ENCODE measurements at regions of chr19 and their contacts with region 1.

Region 1: DNA sequence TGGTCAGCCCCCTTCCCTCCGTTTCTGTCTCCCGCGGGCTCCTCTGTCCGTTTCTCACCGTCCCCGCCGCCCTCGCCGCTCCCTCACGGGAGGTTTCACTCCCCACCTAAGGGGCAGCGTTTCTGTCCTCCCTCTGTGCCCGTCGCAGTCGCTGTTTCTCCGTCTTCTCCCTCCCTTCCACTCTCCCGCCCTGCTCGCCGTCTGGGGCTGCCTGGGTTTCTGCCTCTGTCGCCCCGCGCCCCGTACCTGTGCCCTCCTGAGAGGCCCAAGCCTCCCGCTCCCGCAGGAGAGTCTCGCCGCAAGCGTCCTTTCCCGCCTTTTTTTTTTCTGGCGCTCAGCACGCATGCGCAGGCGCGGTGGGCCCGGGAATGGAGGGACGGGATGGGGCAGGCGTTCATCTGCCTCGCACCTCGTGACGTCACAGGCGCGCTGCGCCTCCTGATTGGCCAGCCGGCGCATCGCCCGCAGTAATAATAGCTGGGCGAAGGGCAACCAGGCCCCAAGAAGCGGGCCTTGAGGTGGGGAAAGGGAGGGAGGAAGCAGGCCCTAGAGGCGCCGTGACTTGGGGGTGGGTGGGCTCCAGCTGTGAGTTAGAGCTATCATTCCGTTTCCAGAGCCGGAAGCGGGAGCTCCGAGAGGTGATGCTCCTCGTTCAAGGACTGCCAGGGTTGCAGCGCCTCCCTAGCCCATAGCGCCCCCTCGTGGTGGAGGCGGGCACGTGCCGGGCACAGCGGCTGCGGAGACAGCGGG is 15.4 kb downstream of the SSC5D start:
- DNase-seq: peak; percentile 95
- ATAC-seq: peak; percentile 98
- H3K4me3 Mint-ChIP-seq: peak overlapping the region; percentile 64
- H3K27ac Mint-ChIP-seq: peak overlapping the region; percentile 86
- H3K4me1 Mint-ChIP-seq: peaks cover 23% of the 10 kb centered on the region
- H3K27me3 Mint-ChIP-seq: peaks cover 4% of the 10 kb centered on the region

Region 2: GRCh38 chr19:55160128-55160985 is 343.3 kb before region 1 on chr19:
- CTCF ChIA-PET with region 1: interaction called, 10 read pairs
- DNase-seq: peak; percentile 95
- ATAC-seq: peak; percentile 96
- H3K4me3 Mint-ChIP-seq: no peak overlapping the region
- H3K27ac Mint-ChIP-seq: no peak overlapping the region
- H3K4me1 Mint-ChIP-seq: peaks cover 5% of the 10 kb centered on the region
- H3K27me3 Mint-ChIP-seq: peaks cover 34% of the 10 kb centered on the region

Region 3: DNA sequence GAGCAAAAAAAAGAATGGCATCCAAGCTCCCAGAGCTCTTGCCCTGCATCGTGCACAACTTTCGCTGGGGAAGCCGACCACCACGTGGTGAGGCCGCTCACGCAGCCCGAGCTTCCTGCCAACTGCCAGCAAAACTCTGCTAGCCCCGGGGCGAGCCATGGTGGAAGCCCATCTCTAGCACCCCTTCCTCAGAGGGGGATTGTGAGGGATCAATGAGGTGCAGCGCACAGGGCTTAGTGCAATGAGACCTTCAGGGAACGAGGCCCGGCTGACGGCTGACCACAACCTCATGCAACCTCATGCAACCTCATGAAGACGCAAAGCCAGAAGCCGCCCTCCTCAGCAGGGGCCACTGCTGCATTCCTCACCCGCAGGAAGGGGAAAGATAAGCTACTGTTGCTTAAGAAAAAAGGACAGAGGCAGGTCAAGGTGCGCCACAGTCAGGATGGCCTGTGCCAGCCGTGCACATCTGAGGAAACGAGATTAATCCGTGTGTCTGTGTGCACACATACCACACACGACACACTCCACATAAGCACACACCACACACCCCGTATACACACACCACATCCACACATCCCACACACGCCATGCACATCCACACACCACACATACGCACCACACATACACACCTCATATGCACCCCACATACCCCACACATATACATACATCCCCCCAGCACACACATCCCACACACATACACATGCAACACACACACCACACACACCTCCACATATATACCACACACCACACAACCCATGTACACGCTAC is 233.3 kb before region 1 on chr19:
- CTCF ChIA-PET with region 1: no interaction called
- DNase-seq: peak; percentile 67
- ATAC-seq: peak; percentile 43
- H3K4me3 Mint-ChIP-seq: peak overlapping the region; percentile 1
- H3K27ac Mint-ChIP-seq: peak overlapping the region; percentile 41
- H3K4me1 Mint-ChIP-seq: peaks cover 19% of the 10 kb centered on the region
- H3K27me3 Mint-ChIP-seq: no peaks in the 10 kb centered on the region

Region 4: GRCh38 chr19:55301459-55302317 is 202.0 kb before region 1 on chr19:
- CTCF ChIA-PET with region 1: interaction called, 13 read pairs
- DNase-seq: peak; percentile 96
- ATAC-seq: peak; percentile 95
- H3K4me3 Mint-ChIP-seq: peak overlapping the region; percentile 78
- H3K27ac Mint-ChIP-seq: peak overlapping the region; percentile 94
- H3K4me1 Mint-ChIP-seq: peaks cover 31% of the 10 kb centered on the region
- H3K27me3 Mint-ChIP-seq: peaks cover 3% of the 10 kb centered on the region

Region 5: DNA sequence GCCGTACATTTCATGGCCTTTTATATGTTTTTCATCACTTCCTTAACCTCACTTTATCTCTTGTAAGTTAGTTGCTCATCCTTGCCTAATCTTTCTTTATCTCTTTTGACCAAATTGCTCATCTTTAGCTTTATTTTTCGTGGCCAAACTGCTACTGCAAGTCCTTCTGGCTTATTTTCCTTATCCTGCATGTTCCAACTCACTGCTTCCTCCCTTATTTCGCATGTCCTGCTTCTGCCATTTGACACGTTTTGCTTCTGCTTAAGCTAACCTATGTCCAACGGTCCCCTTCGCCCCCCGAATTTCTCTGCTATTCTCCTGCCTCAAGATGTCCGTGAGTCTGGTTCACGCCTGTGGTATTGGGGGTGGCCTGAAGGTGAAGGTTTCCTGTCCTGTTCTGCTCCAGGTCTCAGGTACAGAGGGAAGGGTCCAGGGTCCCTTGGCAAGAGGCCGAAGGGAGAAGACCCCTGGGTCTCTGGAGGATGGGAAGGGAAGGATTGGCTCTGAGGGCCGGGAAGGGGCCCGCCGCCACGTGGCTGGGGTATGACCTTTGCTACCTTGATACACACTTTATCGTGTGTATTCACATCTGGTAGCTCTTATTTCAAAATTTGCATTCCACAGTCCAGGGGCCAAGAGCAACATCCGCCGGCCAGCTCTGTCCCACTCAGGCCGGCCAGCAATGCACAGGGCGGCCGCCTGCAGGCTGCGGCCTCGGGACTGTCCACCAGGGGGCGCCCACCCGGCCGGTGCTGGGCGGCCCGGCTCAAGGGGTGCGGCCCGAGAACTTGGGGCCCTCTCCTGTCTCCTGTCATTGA is 36.2 kb before region 1 on chr19:
- CTCF ChIA-PET with region 1: interaction called, 76 read pairs
- DNase-seq: peak; percentile 74
- ATAC-seq: peak; percentile 96
- H3K4me3 Mint-ChIP-seq: no peak overlapping the region
- H3K27ac Mint-ChIP-seq: no peak overlapping the region
- H3K4me1 Mint-ChIP-seq: peaks cover 3% of the 10 kb centered on the region
- H3K27me3 Mint-ChIP-seq: peaks cover 2% of the 10 kb centered on the region

Region 6: GRCh38 chr19:55516878-55517620 is 13.4 kb after region 1 on chr19:
- CTCF ChIA-PET with region 1: interaction called, 14 read pairs
- DNase-seq: peak; percentile 92
- ATAC-seq: peak; percentile 100
- H3K4me3 Mint-ChIP-seq: peak overlapping the region; percentile 54
- H3K27ac Mint-ChIP-seq: peak overlapping the region; percentile 71
- H3K4me1 Mint-ChIP-seq: peaks cover 3% of the 10 kb centered on the region
- H3K27me3 Mint-ChIP-seq: peaks cover 6% of the 10 kb centered on the region

Region 7: DNA sequence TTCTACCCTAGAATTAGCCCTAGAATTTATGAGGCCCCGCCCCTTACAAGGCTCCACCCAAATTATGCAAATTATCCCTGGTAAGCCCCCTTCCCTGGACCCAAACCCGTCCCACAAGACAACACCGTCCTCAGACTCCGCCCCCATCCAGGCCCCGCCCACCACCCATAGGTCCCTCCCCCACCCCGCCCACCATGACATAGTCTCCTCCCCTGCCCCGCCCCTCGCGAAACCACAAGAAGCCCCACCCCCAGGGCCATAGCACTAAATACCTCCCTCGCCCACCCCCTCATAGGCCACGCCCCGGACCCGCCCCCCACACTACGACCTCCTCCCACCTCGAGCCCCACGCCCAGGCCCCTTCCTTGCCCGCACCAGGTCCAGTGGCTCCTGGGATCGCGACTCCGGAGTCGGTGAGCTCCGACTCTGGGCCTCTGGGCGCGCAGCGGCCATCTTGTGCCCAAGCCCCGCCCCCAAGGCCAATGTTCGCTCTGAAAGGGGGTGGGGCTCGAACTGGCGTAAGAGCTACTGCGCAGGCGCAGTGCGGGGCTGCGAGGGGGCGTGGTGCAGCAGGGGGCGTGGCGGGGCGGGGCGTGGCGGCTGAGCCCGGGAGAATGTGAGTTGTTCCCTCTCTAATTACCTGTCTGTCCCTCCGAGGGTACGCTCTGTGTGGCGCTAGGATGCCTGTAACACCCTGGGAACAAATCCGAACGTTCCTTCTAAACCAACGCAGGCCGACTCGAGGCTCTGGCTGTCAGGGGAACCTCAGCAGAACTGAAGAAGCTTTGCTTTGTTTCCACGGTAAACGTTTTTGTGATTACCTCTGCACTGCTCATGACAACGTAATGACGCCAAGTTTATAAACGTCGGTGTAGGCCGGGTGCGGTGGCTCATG is 120.7 kb after region 1 on chr19 and contains the start of gene ZNF784:
- CTCF ChIA-PET with region 1: interaction called, 18 read pairs
- DNase-seq: peak; percentile 95
- ATAC-seq: peak; percentile 73
- H3K4me3 Mint-ChIP-seq: peak within 1 kb of the TSS; percentile 77
- H3K27ac Mint-ChIP-seq: peak within 1 kb of the TSS; percentile 93
- H3K4me1 Mint-ChIP-seq: peaks cover 58% of the 10 kb centered on the region
- H3K27me3 Mint-ChIP-seq: peaks cover 10% of the 10 kb centered on the region
- total RNA-seq, gene ZNF784: 5.1 to 7.3 TPM

Region 8: GRCh38 chr19:55820037-55820436 is 316.4 kb after region 1 on chr19:
- CTCF ChIA-PET with region 1: no interaction called
- DNase-seq: no peak
- ATAC-seq: no peak
- H3K4me3 Mint-ChIP-seq: no peak overlapping the region
- H3K27ac Mint-ChIP-seq: no peak overlapping the region
- H3K4me1 Mint-ChIP-seq: no peaks in the 10 kb centered on the region
- H3K27me3 Mint-ChIP-seq: no peaks in the 10 kb centered on the region

Measured in activated CD8-positive, alpha-beta memory T cell treated with anti-CD3 and anti-CD28 coated beads, Interleukin-2, amount 10 ng/mL, durations not matched to agents 7 days and 5 days (primary cell).